Posterior vena cava (tissue), 2 donors: ENCODE measurements at regions of chr13 and their contacts with region 1.

Region 1: DNA sequence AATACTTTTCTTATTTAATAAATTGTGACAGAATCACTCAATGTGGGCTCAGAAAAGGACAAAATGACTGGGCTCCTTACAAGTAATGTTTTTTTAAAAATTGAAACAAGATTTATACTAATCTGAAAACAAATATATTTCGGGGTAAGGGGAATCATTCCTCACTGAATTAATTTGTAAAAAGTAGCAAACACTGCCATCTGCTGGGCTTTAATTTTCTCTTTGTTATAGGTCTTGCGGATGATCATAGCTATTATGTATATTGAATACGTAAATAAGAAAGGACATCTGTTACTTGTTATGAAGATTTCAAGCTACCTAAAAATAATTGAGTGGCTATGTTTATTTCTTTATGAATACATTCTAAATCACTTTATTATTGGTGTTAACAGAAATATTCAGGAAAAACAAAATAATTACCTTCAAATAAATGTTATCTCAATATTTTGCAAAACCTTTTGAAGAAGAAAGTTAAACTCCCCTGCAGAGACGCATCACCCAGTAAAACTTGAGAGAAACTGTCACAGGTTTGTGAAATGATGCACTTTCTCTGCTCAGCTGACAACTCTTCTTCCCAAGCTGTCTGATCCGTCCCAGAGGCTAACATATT is 17.8 kb upstream of the ENOX1 start:
- DNase-seq: no peak

Region 2: GRCh38 chr13:42969558-42970172 is 834.9 kb before region 1 on chr13:
- intact Hi-C with region 1: loop called in 1 of 2 experiments (anchors 10 kb)
- DNase-seq: peak; percentile 87

Region 3: GRCh38 chr13:43085545-43085944 is 719.0 kb before region 1 on chr13:
- intact Hi-C with region 1: loop called in 1 of 2 experiments (anchors 10 kb)
- DNase-seq: no peak